Posterior vena cava (tissue), 2 donors: ENCODE measurements at regions of chr5 and their contacts with region 1.

Region 1: DNA sequence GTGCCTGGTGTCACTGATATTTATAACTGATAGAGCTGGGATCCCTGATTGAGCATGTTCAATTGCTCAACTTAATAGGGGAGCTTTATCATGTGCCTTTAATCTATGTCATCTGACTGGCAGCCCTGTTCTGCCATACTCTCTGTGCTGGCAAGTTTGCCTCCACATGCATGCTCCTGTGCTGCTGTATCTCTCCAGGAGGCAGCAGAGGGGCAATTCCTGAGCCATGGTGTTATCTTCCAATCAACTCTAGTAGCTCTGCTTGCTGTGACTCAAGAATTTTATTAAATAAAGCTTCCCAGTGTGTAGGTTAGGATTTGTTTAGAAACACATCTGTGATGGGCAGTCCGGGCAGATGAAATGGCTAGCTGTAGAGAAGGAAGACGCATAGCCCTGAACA is 642.0 kb downstream of the KIF4B start:
- DNase-seq: no peak

Region 2: DNA sequence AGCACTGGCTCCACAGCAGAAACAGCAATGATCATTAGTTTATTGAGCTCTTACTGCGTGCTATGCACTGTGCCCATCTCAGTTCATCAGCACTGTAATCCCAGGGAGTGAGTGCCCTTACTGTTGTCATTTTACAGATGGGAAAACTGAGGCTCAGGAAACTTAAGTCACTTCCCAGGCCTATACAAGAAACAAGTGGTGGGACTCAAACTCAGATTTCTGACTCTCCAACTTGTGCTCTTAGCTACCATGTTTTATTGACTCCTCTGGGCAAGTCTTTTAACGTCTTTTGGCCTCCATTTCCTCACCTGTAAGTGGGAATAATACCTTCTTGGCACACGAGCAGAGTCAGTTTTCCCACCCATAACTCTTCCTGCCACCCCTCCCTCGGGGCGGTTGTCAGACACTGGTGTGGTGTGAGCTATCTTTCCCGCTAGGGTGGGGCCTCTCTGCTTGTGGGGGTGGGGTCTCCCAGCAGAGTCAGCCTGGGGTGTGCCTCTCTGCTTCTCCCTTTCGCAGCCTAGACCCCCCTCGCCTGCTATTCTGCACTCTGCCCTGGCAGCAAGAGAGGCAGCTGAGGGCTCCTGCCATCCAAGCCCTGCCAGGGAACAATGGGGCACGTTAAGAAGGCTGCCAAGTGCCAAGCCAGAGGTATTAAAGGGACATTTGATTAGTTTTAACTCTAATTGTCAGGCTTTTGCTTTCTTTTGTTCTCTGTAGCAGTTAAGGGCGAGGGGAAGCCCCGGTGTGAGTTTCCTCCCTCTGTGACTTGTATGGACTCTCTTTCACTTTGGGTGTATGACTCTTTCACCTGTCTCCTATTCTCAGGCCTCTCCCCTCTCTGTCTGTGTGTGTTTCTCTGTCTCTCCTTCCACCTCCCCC is 1452.9 kb before region 1 on chr5:
- intact Hi-C with region 1: no loop called
- DNase-seq: no peak

Region 3: GRCh38 chr5:155689406-155689805 is 33.8 kb after region 1 on chr5:
- intact Hi-C with region 1: loop called in 1 of 2 experiments (anchors 2 kb)
- DNase-seq: no peak